Left lung (tissue), 14 donors: ENCODE measurements at regions of chr2 and their contacts with region 1.

Region 1: DNA sequence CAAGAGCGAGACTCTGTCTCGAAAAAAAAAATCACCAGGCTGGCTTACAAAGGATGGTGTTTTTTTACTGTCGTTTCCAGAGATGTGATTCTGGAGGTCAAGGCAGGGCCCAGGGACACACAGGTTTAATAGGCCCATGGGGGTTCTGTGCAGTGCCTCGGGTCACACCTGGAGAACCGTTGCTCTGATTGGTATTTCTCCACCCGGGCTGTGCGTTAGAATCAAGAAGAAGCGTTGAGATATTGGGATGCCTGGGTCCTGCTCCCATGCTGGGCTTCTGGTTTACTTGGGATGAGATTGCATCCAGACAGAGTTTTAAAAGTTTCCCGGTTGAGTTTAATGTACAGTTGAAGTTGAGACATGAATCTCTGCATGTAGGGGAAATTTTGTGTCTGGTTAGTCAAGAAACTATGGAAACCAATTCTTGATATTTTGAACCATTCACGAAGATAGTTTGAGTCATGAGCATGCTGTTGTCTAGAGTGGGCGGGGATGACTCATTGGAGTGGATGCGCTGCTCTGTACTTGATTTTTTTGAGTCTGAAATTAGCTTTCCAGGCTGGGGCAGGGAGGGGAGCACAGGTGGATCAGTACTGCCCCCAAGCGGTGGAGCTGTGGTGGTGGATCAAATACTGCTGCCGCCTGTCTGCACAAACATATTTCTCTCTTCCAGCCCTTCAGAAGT is 50.1 kb downstream of the GREB1 start:
- DNase-seq: peak in 3 of 4 donors; percentile 58 to 84 (median 74)
- ATAC-seq: peak; percentile 91
- H3K4me3 ChIP-seq: no peak overlapping the region
- H3K27ac ChIP-seq: no peak overlapping the region
- H3K4me1 ChIP-seq: peaks cover 0 to 3% of the 10 kb centered on the region in 2 donors
- H3K27me3 ChIP-seq: no peaks in the 10 kb centered on the region
- CTCF ChIP-seq: peak; percentile 50 to 74

Region 2: GRCh38 chr2:11329781-11330180 is 254.2 kb before region 1 on chr2:
- intact Hi-C with region 1: no loop called
- DNase-seq: no peak
- ATAC-seq: no peak
- H3K4me3 ChIP-seq: no peak overlapping the region
- H3K27ac ChIP-seq: peak overlapping the region in 1 of 2 donors; percentile 8
- H3K4me1 ChIP-seq: peaks cover 7 to 20% of the 10 kb centered on the region in 2 donors
- H3K27me3 ChIP-seq: no peaks in the 10 kb centered on the region
- CTCF ChIP-seq: no peak

Region 3: DNA sequence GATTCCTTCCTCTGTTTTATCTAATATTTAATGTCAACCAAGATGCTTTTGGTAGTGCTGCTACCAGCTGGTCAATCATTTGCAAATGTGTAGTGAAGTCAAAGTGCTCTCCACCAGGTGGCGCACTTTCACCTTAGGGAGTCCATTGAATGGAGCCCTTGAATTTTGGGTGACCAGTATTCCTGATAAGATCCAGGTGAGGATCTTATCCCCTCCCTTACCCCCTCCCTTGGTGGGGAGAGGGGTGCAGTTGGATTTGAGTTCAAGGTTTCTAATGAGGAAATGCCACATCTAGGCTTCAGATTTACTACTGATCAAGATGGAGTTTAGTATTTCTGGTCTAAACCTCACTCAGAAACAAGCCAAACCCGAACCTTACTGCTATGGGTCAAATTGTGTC is 106.0 kb before region 1 on chr2:
- intact Hi-C with region 1: loop called in 1 of 2 experiments (anchors 5 kb)
- DNase-seq: peak in 3 of 4 donors; percentile 79 to 90 (median 82)
- ATAC-seq: peak; percentile 85
- H3K4me3 ChIP-seq: no peak overlapping the region
- H3K27ac ChIP-seq: no peak overlapping the region
- H3K4me1 ChIP-seq: peaks cover 3 to 10% of the 10 kb centered on the region in 2 donors
- H3K27me3 ChIP-seq: peaks cover 17 to 46% of the 10 kb centered on the region in 2 donors
- CTCF ChIP-seq: peak; percentile 80 to 81